GM12878 (cell line): ENCODE measurements at regions of chr11 and their contacts with region 1.

Region 1: GRCh38 chr11:45804761-45805304 is at the start of gene SLC35C1:
- DNase-seq: peak; percentile 63
- ATAC-seq: peak; percentile 97
- H3K4me3 ChIP-seq: peak within 1 kb of the TSS; percentile 100
- H3K27ac ChIP-seq: peak within 1 kb of the TSS; percentile 47
- H3K4me1 ChIP-seq: peaks cover 23% of the 10 kb centered on the region
- H3K27me3 ChIP-seq: no peaks in the 10 kb centered on the region
- CTCF ChIP-seq: peak in 2 of 3 experiments; percentile 21 to 31; a peak in 3 of 6 replicates
- EP300 ChIP-seq: no peak
- POLR2A ChIP-seq: peak; percentile 85
- RAD21 ChIP-seq: no peak
- polyA plus RNA-seq, gene SLC35C1: 0.55 to 0.95 TPM

Region 2: GRCh38 chr11:45736424-45736823 is 68.4 kb before region 1 on chr11:
- CTCF ChIA-PET with region 1: no interaction called
- POLR2A ChIA-PET with region 1: no interaction called
- RAD21 ChIA-PET with region 1: no interaction called
- SMC1A ChIA-PET with region 1: no interaction called
- in situ Hi-C with region 1: no loop called
- intact Hi-C with region 1: no loop called
- DNase-seq: no peak
- ATAC-seq: no peak
- H3K4me3 ChIP-seq: no peak overlapping the region
- H3K27ac ChIP-seq: no peak overlapping the region
- H3K4me1 ChIP-seq: no peaks in the 10 kb centered on the region
- H3K27me3 ChIP-seq: no peaks in the 10 kb centered on the region
- CTCF ChIP-seq: no peak
- EP300 ChIP-seq: no peak
- POLR2A ChIP-seq: no peak
- RAD21 ChIP-seq: no peak

Region 3: GRCh38 chr11:45815449-45816146 is 10.8 kb after region 1 on chr11:
- CTCF ChIA-PET with region 1: interaction called, 15 read pairs
- POLR2A ChIA-PET with region 1: interaction called, 19 read pairs
- RAD21 ChIA-PET with region 1: interaction called, 3 read pairs
- SMC1A ChIA-PET with region 1: interaction called, 11 read pairs
- in situ Hi-C with region 1: no loop called
- intact Hi-C with region 1: no loop called
- DNase-seq: no peak
- ATAC-seq: no peak
- H3K4me3 ChIP-seq: no peak overlapping the region
- H3K27ac ChIP-seq: no peak overlapping the region
- H3K4me1 ChIP-seq: peaks cover 10% of the 10 kb centered on the region
- H3K27me3 ChIP-seq: no peaks in the 10 kb centered on the region
- CTCF ChIP-seq: no peak
- EP300 ChIP-seq: no peak
- POLR2A ChIP-seq: no peak
- RAD21 ChIP-seq: no peak